A673 (cell line): ENCODE measurements at regions of chr12 and their contacts with region 1.

Region 1: GRCh38 chr12:27024291-27024690 is 1.9 kb downstream of the MED21 start:
- DNase-seq: no peak
- H3K4me3 ChIP-seq: no peak overlapping the region
- H3K27ac ChIP-seq: no peak overlapping the region
- H3K4me1 ChIP-seq: peaks cover 9% of the 10 kb centered on the region
- H3K27me3 ChIP-seq: no peaks in the 10 kb centered on the region
- CTCF ChIP-seq: no peak

Region 2: DNA sequence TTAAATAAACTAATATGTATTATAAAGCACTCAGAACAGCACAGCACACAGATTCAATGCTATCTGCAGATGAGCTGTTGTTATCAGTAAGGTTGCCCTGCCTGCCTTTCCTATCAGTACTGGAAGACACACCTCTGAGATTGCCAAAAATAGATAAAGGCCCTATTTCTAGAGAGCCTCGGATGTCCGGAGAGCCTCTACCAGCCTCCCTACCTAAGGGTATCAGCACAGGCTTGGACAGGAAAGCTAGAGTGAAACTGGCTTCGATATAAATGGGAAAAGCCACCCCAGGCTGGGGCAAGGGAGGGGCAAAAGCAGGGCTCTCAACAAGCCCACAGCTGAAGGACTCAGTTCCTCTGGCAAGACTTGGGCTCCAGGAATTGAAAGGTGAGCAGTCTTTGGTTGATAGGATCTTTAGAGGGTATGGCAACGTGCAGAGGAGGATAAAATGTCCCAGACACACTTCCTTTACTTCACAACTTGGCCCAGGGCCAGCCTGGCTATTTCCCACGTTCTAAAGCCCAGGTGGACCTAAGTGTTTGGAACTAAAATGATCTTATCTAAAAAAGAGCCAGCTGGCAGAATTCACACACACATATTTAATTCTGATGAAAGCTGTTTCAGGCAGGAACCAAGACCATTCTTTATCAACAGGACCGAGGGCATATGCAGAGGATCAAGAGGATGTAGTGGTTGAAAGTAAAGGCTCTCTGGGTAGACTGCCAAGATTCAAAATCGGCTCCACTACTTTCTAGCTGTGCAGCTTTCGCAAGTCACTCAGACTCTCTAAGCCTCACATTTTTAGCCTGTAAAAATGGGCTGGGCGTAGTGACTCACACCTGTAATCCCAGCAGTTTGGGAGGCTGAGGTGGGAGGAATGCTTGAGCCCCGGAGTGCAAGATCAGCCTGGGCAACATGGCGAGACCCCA is 153.5 kb before region 1 on chr12:
- CTCF ChIA-PET with region 1: no interaction called
- POLR2A ChIA-PET with region 1: no interaction called
- intact Hi-C with region 1: no loop called
- DNase-seq: peak; percentile 32
- H3K4me3 ChIP-seq: no peak overlapping the region
- H3K27ac ChIP-seq: no peak overlapping the region
- H3K4me1 ChIP-seq: peaks cover 7% of the 10 kb centered on the region
- H3K27me3 ChIP-seq: no peaks in the 10 kb centered on the region
- CTCF ChIP-seq: no peak

Region 3: GRCh38 chr12:27109334-27110028 is 85.2 kb after region 1 on chr12:
- CTCF ChIA-PET with region 1: no interaction called
- POLR2A ChIA-PET with region 1: no interaction called
- intact Hi-C with region 1: loop called (anchors 10 kb)
- DNase-seq: no peak
- H3K4me3 ChIP-seq: no peak overlapping the region
- H3K27ac ChIP-seq: no peak overlapping the region
- H3K4me1 ChIP-seq: peaks cover 7% of the 10 kb centered on the region
- H3K27me3 ChIP-seq: no peaks in the 10 kb centered on the region
- CTCF ChIP-seq: no peak

Region 4: GRCh38 chr12:27151479-27151878 is 127.2 kb after region 1 on chr12:
- CTCF ChIA-PET with region 1: no interaction called
- POLR2A ChIA-PET with region 1: no interaction called
- intact Hi-C with region 1: no loop called
- DNase-seq: no peak
- H3K4me3 ChIP-seq: no peak overlapping the region
- H3K27ac ChIP-seq: no peak overlapping the region
- H3K4me1 ChIP-seq: no peaks in the 10 kb centered on the region
- H3K27me3 ChIP-seq: peaks cover 3% of the 10 kb centered on the region
- CTCF ChIP-seq: no peak